Ovary (tissue), 10 donors: ENCODE measurements at regions of chr10 and their contacts with region 1.

Region 1: GRCh38 chr10:101263150-101263752 is 34.0 kb upstream of the LBX1 start:
- DNase-seq: no peak
- H3K4me3 ChIP-seq: no peak overlapping the region
- H3K27ac ChIP-seq: no peak overlapping the region
- H3K4me1 ChIP-seq: no peaks in the 10 kb centered on the region
- H3K27me3 ChIP-seq: no peaks in the 10 kb centered on the region
- CTCF ChIP-seq: no peak
- EP300 ChIP-seq: no peak
- POLR2A ChIP-seq: no peak

Region 2: DNA sequence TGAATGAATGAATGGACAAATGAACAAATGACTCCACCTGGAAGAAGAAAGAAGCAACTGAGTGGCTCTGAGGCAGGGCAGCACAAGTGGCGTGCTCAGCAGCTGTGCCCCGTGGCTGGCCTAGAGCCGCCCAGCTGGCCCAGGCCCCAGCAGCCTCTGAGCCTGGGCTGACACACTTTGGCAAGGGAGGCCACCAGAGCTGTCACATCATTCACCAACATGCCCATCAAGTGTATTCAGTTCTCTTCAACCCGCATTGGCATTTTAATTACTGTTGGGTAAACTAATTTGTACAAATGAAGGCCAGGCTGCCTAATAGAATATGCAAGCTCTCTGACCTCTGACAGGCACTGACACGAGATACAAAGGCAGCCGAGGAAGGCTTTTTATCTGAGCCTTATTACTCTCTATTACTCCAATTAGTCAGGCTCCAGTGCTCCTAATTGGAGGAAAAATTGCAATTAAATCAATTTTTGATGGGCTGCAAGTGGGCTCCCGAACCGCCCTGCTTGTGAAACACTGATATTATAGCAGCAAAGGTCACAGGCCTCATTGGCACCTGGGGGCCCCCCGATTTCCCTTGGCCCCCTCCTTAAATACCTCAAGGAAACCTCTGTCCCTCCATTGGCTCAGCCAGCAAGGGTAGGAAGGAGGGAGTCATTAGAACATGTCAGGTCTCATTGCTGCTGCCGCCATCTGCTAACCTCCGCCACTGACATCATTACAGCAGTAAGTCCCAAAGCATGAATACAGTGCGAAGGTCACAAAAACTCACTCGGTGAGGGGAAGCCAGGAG is 366.8 kb after region 1 on chr10:
- intact Hi-C with region 1: loop called in 1 of 4 experiments (anchors 5 kb)
- DNase-seq: no peak
- H3K4me3 ChIP-seq: no peak overlapping the region
- H3K27ac ChIP-seq: no peak overlapping the region
- H3K4me1 ChIP-seq: no peaks in the 10 kb centered on the region
- H3K27me3 ChIP-seq: no peaks in the 10 kb centered on the region
- CTCF ChIP-seq: no peak
- EP300 ChIP-seq: no peak
- POLR2A ChIP-seq: no peak

Region 3: DNA sequence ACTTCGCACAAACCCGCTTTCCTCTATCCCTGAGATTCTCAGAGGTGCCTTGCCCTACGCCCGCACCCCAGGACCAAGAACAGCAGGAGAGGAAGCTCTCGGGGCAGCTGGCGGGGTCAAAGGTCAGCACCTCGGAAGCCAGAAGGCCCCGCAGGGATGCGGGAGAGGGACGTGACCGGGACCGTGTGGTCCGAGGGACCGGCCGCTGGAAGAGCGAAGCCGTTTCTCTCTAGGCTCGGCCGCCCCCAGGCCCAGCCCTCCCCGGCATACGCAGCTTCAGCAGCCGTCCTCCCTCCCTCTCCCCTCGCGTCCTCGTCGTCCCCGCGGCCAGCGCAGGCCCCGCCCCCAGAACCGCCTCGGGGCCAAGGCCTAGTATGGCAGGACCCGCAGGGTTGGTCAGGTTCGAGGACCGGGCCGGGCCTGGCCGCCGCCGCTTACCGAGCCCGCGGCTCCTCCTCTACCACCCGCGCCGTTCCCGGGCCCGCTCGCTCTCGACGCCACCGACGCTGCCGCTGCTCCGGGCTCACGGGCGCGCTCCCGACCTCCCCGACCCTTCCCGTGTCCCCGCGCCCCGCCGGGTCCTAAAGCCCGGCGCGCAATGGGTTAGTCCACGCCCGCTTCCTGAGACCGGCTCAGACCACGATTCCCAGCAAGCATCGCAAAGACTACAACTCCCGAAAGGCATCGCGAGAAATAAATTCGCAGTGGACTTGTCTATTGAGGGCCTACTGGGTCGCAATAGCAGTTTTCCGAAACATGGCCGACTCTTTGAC is 792.6 kb after region 1 on chr10 and contains the start of gene ARMH3:
- intact Hi-C with region 1: no loop called
- DNase-seq: peak; percentile 89 to 92 (median 90)
- H3K4me3 ChIP-seq: peak within 1 kb of the TSS; percentile 86
- H3K27ac ChIP-seq: peak within 1 kb of the TSS; percentile 62 to 83
- H3K4me1 ChIP-seq: peaks cover 1% of the 10 kb centered on the region
- H3K27me3 ChIP-seq: no peaks in the 10 kb centered on the region
- CTCF ChIP-seq: peak in 2 of 3 donors; percentile 22 to 37
- EP300 ChIP-seq: no peak
- POLR2A ChIP-seq: peak; percentile 68
- total RNA-seq, gene ARMH3: 9.1 to 24.2 (median 18.1) TPM